Psoas muscle (tissue), 8 donors: ENCODE measurements at regions of chr12 and their contacts with region 1.

Region 1: GRCh38 chr12:112906712-112907414 is at the start of gene OAS1:
- DNase-seq: no peak
- ATAC-seq: peak in 3 of 4 donors; percentile 51 to 70 (median 56)
- H3K4me3 ChIP-seq: peak within 1 kb of the TSS; percentile 61
- H3K27ac ChIP-seq: no peak within 1 kb of the TSS
- H3K4me1 ChIP-seq: no peaks in the 10 kb centered on the region
- H3K27me3 ChIP-seq: no peaks in the 10 kb centered on the region
- CTCF ChIP-seq: no peak
- total RNA-seq, gene OAS1: 1.8 to 3.7 (median 2.6) TPM

Region 2: GRCh38 chr12:113030875-113031525 is 124.1 kb after region 1 on chr12:
- intact Hi-C with region 1: loop called in 1 of 2 experiments (anchors 10 kb)
- DNase-seq: no peak
- ATAC-seq: peak in 1 of 4 donors; percentile 35
- H3K4me3 ChIP-seq: no peak overlapping the region
- H3K27ac ChIP-seq: no peak overlapping the region
- H3K4me1 ChIP-seq: no peaks in the 10 kb centered on the region
- H3K27me3 ChIP-seq: no peaks in the 10 kb centered on the region
- CTCF ChIP-seq: peak; percentile 48